Right ventricle myocardium inferior (tissue), 1 donor: ENCODE measurements at regions of chr2 and their contacts with region 1.

Region 1: GRCh38 chr2:197804049-197804757 is at the start of gene PLCL1:
- DNase-seq: peak; percentile 96
- ATAC-seq: peak; percentile 95
- total RNA-seq, gene PLCL1: 96.2 TPM

Region 2: GRCh38 chr2:197851451-197851850 is 47.2 kb after region 1 on chr2:
- intact Hi-C with region 1: loop called (anchors 5 kb)
- DNase-seq: no peak
- ATAC-seq: no peak

Region 3: GRCh38 chr2:197894751-197895274 is 90.6 kb after region 1 on chr2:
- intact Hi-C with region 1: loop called (anchors 5 kb)
- DNase-seq: no peak
- ATAC-seq: no peak

Region 4: DNA sequence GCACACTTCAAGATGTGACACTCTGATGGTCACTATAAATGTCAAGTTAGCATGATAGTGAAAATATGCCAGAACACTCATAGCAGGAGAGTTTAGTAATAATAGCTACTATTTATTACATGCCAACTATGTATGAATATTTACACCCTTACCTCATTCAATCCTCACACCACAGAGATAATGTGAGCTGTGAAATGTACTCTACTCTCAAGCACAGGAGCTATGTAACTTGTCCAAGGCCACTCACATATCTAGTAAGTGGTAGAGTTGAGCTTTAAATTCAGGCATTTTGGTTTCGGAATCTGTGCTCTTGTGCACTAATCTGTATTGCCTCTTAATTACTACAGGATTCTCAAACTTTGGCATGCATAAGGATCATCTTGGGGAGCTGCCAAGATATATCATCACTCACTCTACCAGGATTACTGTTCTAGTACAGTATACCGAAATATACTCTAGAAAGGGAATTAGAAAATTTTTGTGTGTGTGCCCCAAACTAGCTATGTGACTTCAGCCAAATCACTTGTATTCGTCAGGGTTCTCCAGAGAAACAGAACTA is 154.5 kb after region 1 on chr2:
- intact Hi-C with region 1: loop called (anchors 1 kb)
- DNase-seq: no peak
- ATAC-seq: peak; percentile 95

Region 5: GRCh38 chr2:198053776-198054698 is 249.8 kb after region 1 on chr2:
- intact Hi-C with region 1: loop called (anchors 5 kb)
- DNase-seq: no peak
- ATAC-seq: peak; percentile 42

Region 6: DNA sequence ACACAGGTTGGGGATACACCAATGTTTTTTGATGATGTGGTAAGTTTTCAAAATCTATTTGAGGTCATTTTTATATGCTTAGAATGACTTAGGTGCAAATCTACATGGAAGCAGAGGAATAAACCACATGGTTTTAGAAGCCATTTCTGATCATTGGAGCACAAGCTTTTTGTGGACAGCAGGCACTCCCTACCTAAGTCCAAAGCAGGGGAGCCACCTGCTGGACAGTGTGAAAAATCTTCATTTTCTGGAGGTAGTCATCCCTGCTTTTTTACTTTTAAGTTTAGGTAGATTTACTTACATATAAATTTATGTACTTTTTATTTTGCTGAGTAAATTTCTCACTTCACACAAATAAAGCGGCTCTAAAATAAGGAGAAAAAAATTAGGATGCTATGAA is 323.4 kb after region 1 on chr2:
- intact Hi-C with region 1: loop called (anchors 1 kb)
- DNase-seq: no peak
- ATAC-seq: peak; percentile 71

Region 7: DNA sequence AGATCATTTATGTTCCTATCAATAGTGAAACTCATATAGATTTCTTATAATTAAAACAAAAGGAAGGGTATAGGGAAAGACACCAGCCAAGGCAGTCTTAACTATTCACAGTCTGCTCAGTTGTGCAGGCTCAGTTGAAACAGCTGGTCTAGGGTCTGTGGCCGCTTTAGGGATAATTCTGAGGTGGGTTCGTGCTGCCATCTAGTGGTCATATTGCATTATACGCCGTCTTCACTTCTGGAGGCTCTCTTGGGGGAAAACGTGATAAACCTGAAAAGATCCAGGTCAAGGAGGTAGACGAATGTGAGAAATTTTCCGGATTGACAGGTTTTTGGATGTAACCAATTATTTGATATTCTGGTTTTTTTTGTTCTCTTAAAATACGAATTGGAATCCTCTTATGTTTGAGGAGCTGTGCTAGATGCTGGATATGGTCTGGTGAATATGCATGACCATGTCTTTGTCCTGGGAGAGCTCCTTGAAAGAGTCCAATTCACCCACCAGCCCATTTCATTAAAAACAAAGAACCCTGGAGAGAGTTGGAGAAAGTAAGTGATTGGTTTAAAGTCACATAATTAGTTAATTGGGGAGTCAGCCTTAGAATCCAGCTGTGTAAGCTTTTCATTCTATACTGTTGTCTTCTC is 492.6 kb after region 1 on chr2:
- intact Hi-C with region 1: loop called (anchors 2 kb)
- DNase-seq: no peak
- ATAC-seq: peak; percentile 51